Activated naive CD4-positive, alpha-beta T cell treated with anti-CD3 and anti-CD28 coated beads for 36 hours (primary cell): ENCODE measurements at regions of chr4 and their contacts with region 1.

Region 1: GRCh38 chr4:146243141-146243882 is 29.0 kb downstream of the REELD1 start:
- DNase-seq: peak; percentile 71
- H3K4me3 Mint-ChIP-seq: peak overlapping the region; percentile 63
- H3K27ac Mint-ChIP-seq: peak overlapping the region; percentile 77
- H3K4me1 Mint-ChIP-seq: peaks cover 35% of the 10 kb centered on the region
- H3K27me3 Mint-ChIP-seq: peaks cover 3% of the 10 kb centered on the region

Region 2: DNA sequence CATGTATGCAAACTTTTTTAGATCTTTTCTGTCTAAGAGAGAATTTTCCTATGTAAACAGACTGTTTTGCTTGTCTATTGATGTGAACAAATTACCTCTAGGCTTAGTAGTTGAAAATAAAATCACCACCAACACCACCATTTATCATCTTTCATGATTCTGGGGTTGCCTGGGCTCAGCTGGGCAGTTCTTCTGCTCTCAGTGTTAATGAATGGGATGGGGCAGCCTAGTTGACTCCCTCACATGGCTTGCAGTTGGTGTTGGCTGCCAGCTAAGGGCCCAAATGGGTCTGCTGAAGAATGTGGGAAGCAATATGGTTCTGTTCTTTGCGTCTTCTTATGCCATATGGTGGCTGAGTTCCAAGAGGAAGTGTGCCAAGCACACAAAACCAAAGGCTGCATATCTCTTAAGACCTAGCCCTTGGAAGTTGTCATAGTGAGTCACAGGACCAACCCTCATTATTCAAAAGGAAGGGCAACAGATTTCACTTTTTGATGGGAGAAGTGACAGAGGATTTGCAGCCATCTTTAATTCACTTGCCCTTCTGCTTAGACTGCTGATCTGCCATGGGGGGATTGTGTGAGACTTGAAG is 11.1 kb before region 1 on chr4:
- CTCF ChIA-PET with region 1: interaction called, 10 read pairs
- intact Hi-C with region 1: no loop called
- DNase-seq: no peak
- H3K4me3 Mint-ChIP-seq: no peak overlapping the region
- H3K27ac Mint-ChIP-seq: no peak overlapping the region
- H3K4me1 Mint-ChIP-seq: no peaks in the 10 kb centered on the region
- H3K27me3 Mint-ChIP-seq: peaks cover 1% of the 10 kb centered on the region

Region 3: DNA sequence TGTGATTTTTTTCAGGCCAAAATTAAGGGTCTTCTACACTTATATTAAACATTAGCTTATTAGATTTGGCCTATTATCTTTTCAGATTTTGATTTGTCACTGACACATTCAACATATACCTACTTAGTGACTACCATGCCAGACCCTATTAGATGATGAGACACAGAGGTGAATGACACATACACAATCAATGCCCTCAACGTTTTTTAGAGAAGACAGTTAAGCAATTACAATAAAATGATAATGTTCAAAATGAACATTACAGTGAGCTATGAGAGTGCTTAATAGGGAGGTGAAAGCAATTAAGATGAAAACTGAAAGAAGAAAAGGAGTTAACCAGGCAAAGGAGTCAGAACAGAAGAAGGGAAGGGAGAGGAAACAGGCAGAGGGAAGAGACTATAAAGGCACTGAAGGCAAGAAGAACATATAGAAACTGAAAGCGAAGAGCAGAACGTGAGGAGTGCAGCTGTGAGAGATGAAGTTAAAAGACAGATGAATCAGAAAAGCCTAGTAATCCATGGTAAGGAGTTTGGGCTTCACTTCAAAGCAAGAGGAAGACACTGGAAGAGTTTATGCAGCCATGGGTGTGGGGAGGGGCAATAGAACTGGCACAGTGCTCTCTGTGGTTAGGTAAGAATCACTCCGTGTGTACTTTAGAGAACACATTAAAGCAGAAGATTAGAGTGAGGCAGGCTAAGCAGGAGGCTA is 90.0 kb after region 1 on chr4:
- CTCF ChIA-PET with region 1: interaction called, 3 read pairs
- intact Hi-C with region 1: loop called (anchors 1 kb)
- DNase-seq: peak; percentile 41
- H3K4me3 Mint-ChIP-seq: no peak overlapping the region
- H3K27ac Mint-ChIP-seq: no peak overlapping the region
- H3K4me1 Mint-ChIP-seq: peaks cover 7% of the 10 kb centered on the region
- H3K27me3 Mint-ChIP-seq: no peaks in the 10 kb centered on the region

Region 4: DNA sequence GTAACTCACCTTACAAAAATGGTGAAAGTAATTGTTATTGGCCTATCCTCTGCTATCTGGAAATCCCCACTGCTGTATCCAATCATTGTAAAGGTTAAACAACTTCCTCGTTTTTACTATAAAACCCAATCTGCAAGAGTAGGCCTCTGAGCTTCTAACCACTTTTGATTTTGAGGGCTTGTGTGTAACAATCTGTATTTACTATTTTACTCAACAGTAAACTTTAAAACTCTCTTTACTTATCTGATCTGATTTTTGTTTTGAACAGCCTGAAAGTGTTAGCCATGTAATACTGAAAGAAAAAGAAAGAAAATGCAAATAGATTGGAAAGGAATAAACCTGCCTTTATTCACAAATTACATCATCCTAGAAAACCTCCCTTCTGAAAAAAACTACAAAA is 215.3 kb after region 1 on chr4:
- CTCF ChIA-PET with region 1: no interaction called
- intact Hi-C with region 1: loop called (anchors 1 kb)
- DNase-seq: peak; percentile 15
- H3K4me3 Mint-ChIP-seq: peak overlapping the region; percentile 63
- H3K27ac Mint-ChIP-seq: peak overlapping the region; percentile 91
- H3K4me1 Mint-ChIP-seq: peaks cover 32% of the 10 kb centered on the region
- H3K27me3 Mint-ChIP-seq: no peaks in the 10 kb centered on the region

Region 5: GRCh38 chr4:146916479-146917076 is 673.3 kb after region 1 on chr4:
- CTCF ChIA-PET with region 1: no interaction called
- intact Hi-C with region 1: loop called (anchors 1 kb)
- DNase-seq: peak; percentile 28
- H3K4me3 Mint-ChIP-seq: no peak overlapping the region
- H3K27ac Mint-ChIP-seq: no peak overlapping the region
- H3K4me1 Mint-ChIP-seq: no peaks in the 10 kb centered on the region
- H3K27me3 Mint-ChIP-seq: peaks cover 4% of the 10 kb centered on the region

Region 6: GRCh38 chr4:147590249-147590920 is 1347.1 kb after region 1 on chr4:
- CTCF ChIA-PET with region 1: no interaction called
- intact Hi-C with region 1: loop called (anchors 2 kb)
- DNase-seq: peak; percentile 64
- H3K4me3 Mint-ChIP-seq: no peak overlapping the region
- H3K27ac Mint-ChIP-seq: no peak overlapping the region
- H3K4me1 Mint-ChIP-seq: peaks cover 2% of the 10 kb centered on the region
- H3K27me3 Mint-ChIP-seq: no peaks in the 10 kb centered on the region